Naive thymus-derived CD4-positive, alpha-beta T cell (primary cell): ENCODE measurements at regions of chr5 and their contacts with region 1.

Region 1: GRCh38 chr5:67059744-67060490 is 136.7 kb downstream of the CD180 start:
- DNase-seq: no peak
- ATAC-seq: no peak
- H3K4me3 ChIP-seq: no peak overlapping the region
- H3K4me3 Mint-ChIP-seq: no peak overlapping the region
- H3K27ac ChIP-seq: no peak overlapping the region
- H3K27ac Mint-ChIP-seq: peak overlapping the region in 2 of 9 donors; percentile 22 to 26
- H3K4me1 ChIP-seq: peaks cover 0 to 3% of the 10 kb centered on the region in 2 donors
- H3K4me1 Mint-ChIP-seq: peaks cover 11 to 33% (median 20%) of the 10 kb centered on the region in 7 donors
- H3K27me3 ChIP-seq: no peaks in the 10 kb centered on the region
- H3K27me3 Mint-ChIP-seq: no peaks in the 10 kb centered on the region

Region 2: DNA sequence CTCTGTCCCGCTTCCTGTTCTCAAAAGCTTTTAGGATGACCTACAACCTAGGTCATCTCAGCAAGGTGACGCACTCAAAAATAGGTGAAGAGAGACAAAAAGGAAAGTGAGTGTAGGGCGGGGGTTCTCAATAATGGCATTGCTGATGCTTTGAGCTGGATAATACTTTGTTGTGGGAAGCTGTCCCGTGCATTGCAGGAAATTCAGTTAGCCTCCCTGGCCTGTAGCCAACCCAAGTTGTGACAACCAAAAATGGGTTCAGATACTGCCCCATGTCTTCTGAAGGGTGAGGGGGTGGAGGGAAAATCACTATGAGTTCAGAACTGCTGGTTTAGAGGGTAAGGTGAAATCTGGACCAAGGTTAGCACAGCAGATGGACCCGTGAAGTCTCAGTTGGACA is 312.3 kb before region 1 on chr5:
- CTCF ChIA-PET with region 1: no interaction called
- POLR2A ChIA-PET with region 1: no interaction called
- intact Hi-C with region 1: no loop called
- DNase-seq: no peak
- ATAC-seq: no peak
- H3K4me3 ChIP-seq: no peak overlapping the region
- H3K4me3 Mint-ChIP-seq: no peak overlapping the region
- H3K27ac ChIP-seq: no peak overlapping the region
- H3K27ac Mint-ChIP-seq: no peak overlapping the region
- H3K4me1 ChIP-seq: no peaks in the 10 kb centered on the region
- H3K4me1 Mint-ChIP-seq: peaks cover 0 to 10% (median 6%) of the 10 kb centered on the region in 7 donors
- H3K27me3 ChIP-seq: no peaks in the 10 kb centered on the region
- H3K27me3 Mint-ChIP-seq: peaks cover 2 to 39% (median 29%) of the 10 kb centered on the region in 5 donors

Region 3: DNA sequence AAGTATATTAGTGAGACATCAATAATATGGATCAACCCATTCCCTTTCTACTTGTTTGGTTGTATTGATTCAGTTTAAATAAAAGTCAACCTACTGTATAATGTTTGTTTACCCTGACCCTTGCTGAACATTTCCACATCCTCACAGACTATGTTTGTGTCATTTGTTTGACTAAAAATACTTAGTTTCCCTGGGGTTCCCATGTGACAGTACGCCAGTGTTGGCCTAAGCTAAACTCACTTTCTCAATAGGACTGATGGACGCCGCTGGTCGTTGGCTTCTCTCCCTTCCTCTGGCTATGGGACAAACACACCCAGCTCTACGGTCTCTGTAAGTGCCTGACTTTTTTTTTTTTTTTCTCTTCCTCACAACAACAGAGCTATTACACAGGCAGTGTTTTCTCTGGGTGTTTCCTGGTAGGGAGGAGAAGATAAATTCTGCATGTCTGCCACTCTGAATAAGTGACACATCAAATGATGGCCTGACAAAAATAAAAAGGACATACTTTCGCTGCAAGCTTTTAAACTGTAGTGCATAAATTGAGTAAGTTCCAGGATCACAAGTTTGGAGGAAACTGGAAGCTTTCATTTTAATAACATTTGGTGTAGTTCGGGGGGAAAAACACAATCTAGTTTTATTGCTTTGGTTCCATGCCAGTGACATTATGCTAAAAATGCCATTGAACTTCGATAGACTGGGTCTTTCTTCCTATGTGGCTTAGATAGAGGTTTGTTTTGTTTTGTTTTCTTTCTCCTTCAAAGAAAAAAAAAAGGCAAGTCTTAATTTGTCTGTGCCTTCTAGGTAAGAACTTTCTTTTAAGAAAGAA is 35.6 kb after region 1 on chr5:
- CTCF ChIA-PET with region 1: no interaction called
- POLR2A ChIA-PET with region 1: no interaction called
- intact Hi-C with region 1: loop called in 1 of 2 experiments (anchors 10 kb)
- DNase-seq: no peak
- ATAC-seq: no peak
- H3K4me3 ChIP-seq: no peak overlapping the region
- H3K4me3 Mint-ChIP-seq: no peak overlapping the region
- H3K27ac ChIP-seq: no peak overlapping the region
- H3K27ac Mint-ChIP-seq: no peak overlapping the region
- H3K4me1 ChIP-seq: no peaks in the 10 kb centered on the region
- H3K4me1 Mint-ChIP-seq: peaks cover 0 to 12% (median 4%) of the 10 kb centered on the region in 7 donors
- H3K27me3 ChIP-seq: no peaks in the 10 kb centered on the region
- H3K27me3 Mint-ChIP-seq: no peaks in the 10 kb centered on the region